Endothelial cell of umbilical vein (primary cell): ENCODE measurements at regions of chr15 and their contacts with region 1.

Region 1: DNA sequence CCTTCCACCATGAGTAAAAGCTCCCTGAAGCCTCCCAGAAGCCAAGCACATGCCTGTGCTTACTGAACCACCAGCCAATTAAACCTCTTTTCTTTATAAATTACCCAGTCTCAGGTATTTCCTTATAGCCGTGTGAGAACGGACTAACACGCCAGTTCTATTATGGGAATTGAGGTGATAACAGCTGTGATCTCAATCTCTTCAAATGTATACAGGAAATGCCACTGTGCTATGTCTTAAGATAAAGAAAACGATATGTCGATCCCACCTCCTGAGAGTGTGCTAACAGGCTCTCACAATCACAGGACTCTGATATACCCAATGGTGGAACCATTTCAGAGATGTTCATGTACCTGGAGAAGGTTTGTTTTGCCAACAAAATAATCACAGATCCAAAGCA is 26.2 kb downstream of the CHSY1 start:
- DNase-seq: peak; percentile 23
- H3K4me3 ChIP-seq: no peak overlapping the region
- H3K27ac ChIP-seq: peak overlapping the region; percentile 5
- H3K4me1 ChIP-seq: peaks cover 9% of the 10 kb centered on the region
- H3K27me3 ChIP-seq: no peaks in the 10 kb centered on the region
- CTCF ChIP-seq: no peak
- POLR2A ChIP-seq: no peak

Region 2: GRCh38 chr15:101176625-101177024 is 49.0 kb before region 1 on chr15:
- CTCF ChIA-PET with region 1: no interaction called
- POLR2A ChIA-PET with region 1: interaction called, 3 read pairs
- dilution Hi-C with region 1: no loop called
- intact Hi-C with region 1: loop called (anchors 2 kb)
- DNase-seq: peak; percentile 79
- H3K4me3 ChIP-seq: no peak overlapping the region
- H3K27ac ChIP-seq: peak overlapping the region; percentile 68
- H3K4me1 ChIP-seq: peaks cover 27% of the 10 kb centered on the region
- H3K27me3 ChIP-seq: no peaks in the 10 kb centered on the region
- CTCF ChIP-seq: no peak
- POLR2A ChIP-seq: no peak

Region 3: DNA sequence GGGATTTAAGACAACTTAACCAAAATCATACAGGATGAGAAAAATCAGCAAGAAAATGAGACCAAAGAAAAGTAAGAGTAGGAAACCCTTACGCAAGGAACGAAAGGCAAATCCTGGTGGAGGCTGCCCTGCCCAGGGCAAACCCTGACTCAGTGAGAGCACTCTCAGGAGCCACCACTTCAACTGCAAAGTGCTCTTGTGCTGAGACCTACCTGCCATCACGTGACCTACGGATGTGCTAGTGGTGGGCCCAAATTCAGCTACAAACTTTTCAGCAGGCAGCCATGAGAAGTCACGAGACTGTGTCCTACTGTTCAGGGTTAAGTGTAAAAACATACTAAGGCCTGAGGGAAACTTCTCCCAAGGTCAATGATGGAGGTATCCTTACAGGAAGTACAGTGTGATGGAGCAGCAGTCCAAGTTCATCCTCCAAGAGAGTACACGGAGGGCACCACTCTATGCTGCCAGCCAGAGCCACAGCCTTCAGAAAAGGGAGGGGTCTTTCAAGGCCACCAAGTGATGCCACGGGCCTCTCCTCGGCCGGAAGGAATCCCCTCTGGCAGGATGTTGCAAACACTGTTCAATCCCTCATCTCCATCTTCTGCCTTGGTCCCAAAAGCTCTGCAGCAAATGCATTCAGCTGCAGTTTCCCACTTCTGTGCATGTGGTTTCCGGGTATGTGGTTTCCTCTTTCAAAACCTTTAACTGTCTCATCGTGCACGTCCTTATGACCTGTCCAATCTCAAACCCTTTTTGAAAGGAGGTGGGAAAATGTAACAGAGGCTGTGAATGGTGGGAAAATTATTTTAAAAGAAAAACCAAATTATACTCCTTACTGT is 16.7 kb after region 1 on chr15:
- CTCF ChIA-PET with region 1: interaction called, 4 read pairs
- POLR2A ChIA-PET with region 1: no interaction called
- dilution Hi-C with region 1: no loop called
- intact Hi-C with region 1: loop called (anchors 2 kb)
- DNase-seq: no peak
- H3K4me3 ChIP-seq: no peak overlapping the region
- H3K27ac ChIP-seq: no peak overlapping the region
- H3K4me1 ChIP-seq: peaks cover 47% of the 10 kb centered on the region
- H3K27me3 ChIP-seq: no peaks in the 10 kb centered on the region
- CTCF ChIP-seq: no peak
- POLR2A ChIP-seq: no peak

Region 4: GRCh38 chr15:101391981-101392640 is 166.5 kb after region 1 on chr15:
- CTCF ChIA-PET with region 1: no interaction called
- POLR2A ChIA-PET with region 1: no interaction called
- dilution Hi-C with region 1: no loop called
- intact Hi-C with region 1: no loop called
- DNase-seq: no peak
- H3K4me3 ChIP-seq: no peak overlapping the region
- H3K27ac ChIP-seq: no peak overlapping the region
- H3K4me1 ChIP-seq: no peaks in the 10 kb centered on the region
- H3K27me3 ChIP-seq: no peaks in the 10 kb centered on the region
- CTCF ChIP-seq: no peak
- POLR2A ChIP-seq: no peak